AG04450 (cell line): ENCODE measurements at regions of chr3 and their contacts with region 1.

Region 1: DNA sequence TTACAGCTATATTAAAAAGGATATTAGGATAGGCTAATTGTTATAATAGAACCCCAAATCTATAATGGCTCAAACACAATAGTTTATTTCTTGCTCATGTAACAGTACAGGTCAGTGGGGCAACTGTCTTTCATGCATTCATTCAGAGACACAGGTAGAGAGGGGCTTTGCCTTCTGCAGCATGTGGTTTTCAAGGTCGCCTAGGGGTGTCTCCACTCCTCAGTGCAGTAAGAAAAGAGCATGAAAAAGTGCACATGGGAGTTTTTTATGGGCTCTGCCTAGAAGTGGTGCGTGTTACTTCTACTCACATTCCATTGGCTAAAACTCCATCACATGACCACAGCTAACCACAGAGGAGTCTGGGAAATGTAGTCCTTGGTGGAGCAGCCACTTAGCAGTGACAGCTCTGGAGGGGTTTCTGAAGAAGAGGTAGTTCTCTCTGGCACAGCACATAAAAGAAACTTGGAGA is 1.8 kb downstream of the ZBTB38 start:
- DNase-seq: no peak
- H3K4me3 ChIP-seq: no peak overlapping the region; the same call in 1 of the 2 replicates
- H3K27ac ChIP-seq: no peak overlapping the region
- H3K27me3 ChIP-seq: no peaks in the 10 kb centered on the region
- CTCF ChIP-seq: peak; percentile 37

Region 2: GRCh38 chr3:141311496-141312353 is 58.4 kb before region 1 on chr3:
- CTCF ChIA-PET with region 1: interaction called, 6 read pairs
- POLR2A ChIA-PET with region 1: interaction called, 11 read pairs
- DNase-seq: peak; percentile 95
- H3K4me3 ChIP-seq: peak overlapping the region; percentile 90
- H3K27ac ChIP-seq: peak overlapping the region; percentile 65
- H3K27me3 ChIP-seq: no peaks in the 10 kb centered on the region
- CTCF ChIP-seq: peak; percentile 76

Region 3: GRCh38 chr3:141402476-141403171 is 32.5 kb after region 1 on chr3:
- CTCF ChIA-PET with region 1: no interaction called
- POLR2A ChIA-PET with region 1: interaction called, 42 read pairs
- DNase-seq: no peak
- H3K4me3 ChIP-seq: peak overlapping the region; percentile 64
- H3K27ac ChIP-seq: peak overlapping the region; percentile 85
- H3K27me3 ChIP-seq: no peaks in the 10 kb centered on the region
- CTCF ChIP-seq: 0 out of 2 replicates have a peak, but pooled peaks have one; percentile 14